ENCODE measurements at regions of chr3 and their contacts with region 1.

Region 1: GRCh38 chr3:58177747-58178527 is 32.8 kb downstream of the DNASE1L3 start:
- DNase-seq: peak; percentile 89
- H3K4me3 Mint-ChIP-seq: peak overlapping the region; percentile 61
- H3K27ac Mint-ChIP-seq: no peak overlapping the region
- H3K4me1 Mint-ChIP-seq: peaks cover 21% of the 10 kb centered on the region
- H3K27me3 Mint-ChIP-seq: peaks cover 4% of the 10 kb centered on the region

Region 2: DNA sequence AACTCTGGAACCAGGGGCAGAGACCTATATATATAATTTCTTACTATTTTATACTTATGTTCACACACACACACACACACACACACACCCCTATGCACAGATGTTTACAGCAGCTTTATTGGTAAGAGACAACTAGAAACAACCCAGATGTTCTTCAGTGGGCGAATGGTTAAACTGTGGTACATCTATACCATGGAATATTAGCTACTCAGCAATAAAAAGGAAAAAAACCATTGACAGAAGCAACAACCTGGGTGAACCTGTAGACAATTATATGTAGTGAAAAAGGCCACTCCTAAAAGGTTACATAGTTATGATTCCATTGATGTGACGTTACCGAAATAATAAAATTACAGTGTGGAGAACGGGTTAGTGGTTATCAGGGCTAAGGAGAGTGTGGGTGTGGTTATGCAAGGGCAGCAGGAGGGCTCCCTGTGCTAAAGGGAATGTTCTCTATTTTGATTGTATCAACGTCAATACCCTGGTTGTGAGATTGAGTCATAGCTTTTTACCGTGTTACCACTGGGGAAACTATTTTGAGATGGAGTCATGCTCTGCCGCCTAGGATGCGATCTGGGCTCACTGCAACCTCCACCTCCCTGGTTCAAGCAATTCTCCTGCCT is 84.3 kb before region 1 on chr3:
- CTCF ChIA-PET with region 1: no interaction called
- POLR2A ChIA-PET with region 1: no interaction called
- DNase-seq: no peak
- H3K4me3 Mint-ChIP-seq: no peak overlapping the region
- H3K27ac Mint-ChIP-seq: no peak overlapping the region
- H3K4me1 Mint-ChIP-seq: no peaks in the 10 kb centered on the region
- H3K27me3 Mint-ChIP-seq: no peaks in the 10 kb centered on the region

Region 3: DNA sequence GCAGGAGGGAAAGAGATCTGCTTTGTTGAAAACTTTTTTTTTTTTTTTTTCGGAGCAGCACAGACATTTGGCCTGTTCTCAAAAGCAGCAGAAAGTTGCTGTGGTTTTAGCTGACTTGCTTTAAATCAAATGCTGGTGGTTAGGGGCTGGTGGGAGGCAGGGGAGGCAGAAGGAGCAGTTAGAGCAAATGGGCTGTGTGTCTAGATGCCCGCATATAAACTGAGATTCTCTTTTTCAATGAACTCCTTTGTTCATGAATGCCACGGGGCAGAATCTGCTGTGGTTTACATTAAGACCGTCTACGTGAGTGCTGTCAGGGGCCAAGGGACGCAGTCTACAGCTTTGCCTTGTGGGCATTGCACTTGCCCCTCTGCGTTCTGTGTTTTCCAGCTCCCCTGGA is 73.8 kb before region 1 on chr3:
- CTCF ChIA-PET with region 1: no interaction called
- POLR2A ChIA-PET with region 1: no interaction called
- DNase-seq: no peak
- H3K4me3 Mint-ChIP-seq: no peak overlapping the region
- H3K27ac Mint-ChIP-seq: no peak overlapping the region
- H3K4me1 Mint-ChIP-seq: no peaks in the 10 kb centered on the region
- H3K27me3 Mint-ChIP-seq: no peaks in the 10 kb centered on the region

Region 4: GRCh38 chr3:58167431-58168351 is 10.2 kb before region 1 on chr3:
- CTCF ChIA-PET with region 1: interaction called, 52 read pairs
- POLR2A ChIA-PET with region 1: interaction called, 3 read pairs
- DNase-seq: peak; percentile 66
- H3K4me3 Mint-ChIP-seq: no peak overlapping the region
- H3K27ac Mint-ChIP-seq: no peak overlapping the region
- H3K4me1 Mint-ChIP-seq: no peaks in the 10 kb centered on the region
- H3K27me3 Mint-ChIP-seq: no peaks in the 10 kb centered on the region

Region 5: GRCh38 chr3:58188173-58188564 is 10.2 kb after region 1 on chr3:
- CTCF ChIA-PET with region 1: interaction called, 28 read pairs
- POLR2A ChIA-PET with region 1: no interaction called
- DNase-seq: no peak
- H3K4me3 Mint-ChIP-seq: no peak overlapping the region
- H3K27ac Mint-ChIP-seq: no peak overlapping the region
- H3K4me1 Mint-ChIP-seq: no peaks in the 10 kb centered on the region
- H3K27me3 Mint-ChIP-seq: no peaks in the 10 kb centered on the region

Region 6: DNA sequence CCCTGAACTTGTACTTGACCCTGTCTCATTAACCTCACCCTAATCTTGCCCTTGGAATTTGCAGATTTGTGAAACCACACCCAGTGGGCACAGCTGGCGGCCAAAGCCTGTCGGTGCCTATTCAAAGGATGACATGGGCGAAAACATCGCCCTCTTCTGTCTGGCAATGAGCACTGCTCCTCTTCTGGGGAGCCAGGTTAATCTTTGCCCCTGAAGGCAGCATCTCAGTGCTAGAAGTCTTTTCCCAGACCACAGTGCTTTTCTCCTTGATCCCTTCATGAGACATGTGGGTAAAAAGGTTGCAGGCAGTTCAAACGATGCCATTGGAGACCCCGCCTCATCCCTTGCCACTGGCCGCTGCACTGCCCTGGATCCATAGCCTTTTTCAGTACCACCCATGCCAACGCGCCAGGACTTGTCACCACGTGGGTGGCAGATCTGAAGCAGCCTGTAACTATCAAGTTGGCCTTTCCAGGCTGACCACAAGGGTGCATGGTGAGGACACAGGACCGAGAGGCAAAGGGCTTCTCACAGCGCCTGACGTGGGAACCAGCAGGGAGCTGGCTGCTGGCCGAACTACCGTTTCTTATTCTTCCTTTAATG is 39.4 kb after region 1 on chr3:
- CTCF ChIA-PET with region 1: interaction called, 28 read pairs
- POLR2A ChIA-PET with region 1: no interaction called
- DNase-seq: peak; percentile 63
- H3K4me3 Mint-ChIP-seq: no peak overlapping the region
- H3K27ac Mint-ChIP-seq: no peak overlapping the region
- H3K4me1 Mint-ChIP-seq: peaks cover 28% of the 10 kb centered on the region
- H3K27me3 Mint-ChIP-seq: peaks cover 5% of the 10 kb centered on the region

Region 7: DNA sequence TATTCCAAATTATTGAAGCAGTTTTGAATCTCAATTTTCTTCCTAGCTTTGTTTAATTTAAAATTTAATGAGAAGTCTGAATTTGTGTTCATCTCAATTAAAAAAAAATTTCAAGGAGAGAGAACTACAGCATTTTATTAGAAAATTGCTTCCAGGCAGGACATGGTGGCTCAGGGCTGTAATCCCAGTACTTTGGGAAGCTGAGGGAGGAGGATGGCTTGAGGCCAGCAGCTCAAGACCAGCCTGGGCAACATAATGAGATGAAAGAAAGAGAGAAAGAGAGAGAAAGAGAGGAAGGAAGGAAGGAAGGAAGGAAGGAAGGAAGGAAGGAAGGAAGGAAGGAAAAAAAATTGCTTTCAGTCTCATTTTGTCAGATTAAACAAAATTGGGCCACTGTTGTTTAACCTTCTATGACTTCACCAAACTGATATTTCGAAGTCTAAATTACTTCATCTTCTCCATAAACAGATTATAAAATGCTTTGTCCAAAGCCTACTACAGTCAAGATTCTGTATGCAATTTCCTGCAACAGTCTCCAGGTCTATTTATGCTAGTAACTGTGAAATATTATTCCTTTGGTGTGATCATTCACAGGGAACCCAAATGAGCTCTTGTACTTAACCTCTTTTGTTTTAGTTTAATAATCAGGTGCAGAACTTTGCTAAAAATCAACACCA is 53.1 kb after region 1 on chr3:
- CTCF ChIA-PET with region 1: interaction called, 10 read pairs
- POLR2A ChIA-PET with region 1: no interaction called
- DNase-seq: no peak
- H3K4me3 Mint-ChIP-seq: no peak overlapping the region
- H3K27ac Mint-ChIP-seq: no peak overlapping the region
- H3K4me1 Mint-ChIP-seq: peaks cover 3% of the 10 kb centered on the region
- H3K27me3 Mint-ChIP-seq: peaks cover 52% of the 10 kb centered on the region

Region 8: DNA sequence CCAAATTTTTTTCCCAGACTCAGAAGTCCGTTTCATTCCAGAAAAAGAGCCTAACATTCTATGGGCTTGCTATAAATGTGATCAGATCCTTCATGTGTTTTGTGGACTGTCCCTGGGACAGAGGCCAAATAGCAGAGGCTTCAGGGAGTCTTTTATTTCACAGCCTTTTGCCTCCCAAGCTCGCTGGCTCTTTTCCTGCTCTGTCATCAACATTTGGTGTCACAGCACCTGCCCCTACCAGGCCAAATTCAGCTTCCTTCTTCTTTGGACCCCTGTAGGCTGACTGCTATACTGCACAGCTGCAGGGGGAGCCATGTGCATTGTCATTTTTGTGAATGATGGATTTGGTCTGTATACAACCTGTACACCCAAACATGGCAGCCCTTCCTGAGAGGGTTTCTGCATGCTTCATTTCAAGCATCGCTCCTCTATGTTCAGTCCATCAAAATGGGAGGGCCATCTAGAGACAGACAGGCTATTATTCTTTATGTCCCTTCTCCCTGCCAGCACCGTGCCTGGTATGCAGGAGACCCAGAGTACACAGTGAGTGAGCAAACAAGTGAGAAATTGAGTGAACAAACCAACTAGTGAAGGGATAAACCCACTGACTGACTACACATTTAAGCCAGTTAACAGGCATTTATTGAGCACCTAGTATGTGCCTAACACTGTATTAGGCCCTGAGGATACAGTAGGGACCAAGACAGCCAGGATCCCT is 110.2 kb after region 1 on chr3:
- CTCF ChIA-PET with region 1: no interaction called
- POLR2A ChIA-PET with region 1: no interaction called
- DNase-seq: no peak
- H3K4me3 Mint-ChIP-seq: no peak overlapping the region
- H3K27ac Mint-ChIP-seq: no peak overlapping the region
- H3K4me1 Mint-ChIP-seq: no peaks in the 10 kb centered on the region
- H3K27me3 Mint-ChIP-seq: no peaks in the 10 kb centered on the region

Region 9: GRCh38 chr3:58577269-58577821 is 399.4 kb after region 1 on chr3 and contains the start of gene FAM107A:
- CTCF ChIA-PET with region 1: no interaction called
- POLR2A ChIA-PET with region 1: no interaction called
- DNase-seq: no peak
- H3K4me3 Mint-ChIP-seq: no peak within 1 kb of the TSS
- H3K27ac Mint-ChIP-seq: no peak within 1 kb of the TSS
- H3K4me1 Mint-ChIP-seq: no peaks in the 10 kb centered on the region
- H3K27me3 Mint-ChIP-seq: peaks cover 19% of the 10 kb centered on the region
- total RNA-seq, gene FAM107A: not detected

Measured in activated CD4-positive, alpha-beta memory T cell treated with anti-CD3 and anti-CD28 coated beads, Interleukin-2, amount 10 ng/mL, durations not matched to agents 7 days and 5 days (primary cell).